Body of pancreas (tissue), 4 donors: ENCODE measurements at regions of chr10 and their contacts with region 1.

Region 1: DNA sequence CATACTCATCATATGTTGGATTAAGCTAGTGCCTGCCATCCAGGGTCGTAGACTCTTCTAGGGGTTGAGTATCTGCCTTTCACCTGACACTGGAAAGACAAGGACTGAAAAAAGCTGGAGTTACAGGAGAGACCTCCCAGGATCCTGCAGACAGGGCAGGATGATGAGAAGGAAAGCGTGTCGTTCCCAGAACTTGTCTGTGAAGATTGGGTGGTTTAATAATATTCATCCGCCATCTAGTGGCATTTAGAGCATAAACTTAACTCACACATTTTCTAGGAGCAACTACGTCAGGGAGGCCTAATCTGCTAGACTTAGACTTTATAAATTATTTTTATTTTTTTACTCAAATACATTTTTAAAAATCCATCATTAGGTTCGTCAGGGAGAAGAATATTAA is 59.6 kb downstream of the ADRB1 start:
- DNase-seq: peak in 2 of 4 donors; percentile 20 to 24
- ATAC-seq: peak; percentile 76
- H3K4me3 ChIP-seq: no peak overlapping the region
- H3K27ac ChIP-seq: no peak overlapping the region
- H3K4me1 ChIP-seq: peaks cover 12% of the 10 kb centered on the region
- H3K27me3 ChIP-seq: no peaks in the 10 kb centered on the region
- CTCF ChIP-seq: peak; percentile 34 to 84 (median 76)
- POLR2A ChIP-seq: no peak

Region 2: DNA sequence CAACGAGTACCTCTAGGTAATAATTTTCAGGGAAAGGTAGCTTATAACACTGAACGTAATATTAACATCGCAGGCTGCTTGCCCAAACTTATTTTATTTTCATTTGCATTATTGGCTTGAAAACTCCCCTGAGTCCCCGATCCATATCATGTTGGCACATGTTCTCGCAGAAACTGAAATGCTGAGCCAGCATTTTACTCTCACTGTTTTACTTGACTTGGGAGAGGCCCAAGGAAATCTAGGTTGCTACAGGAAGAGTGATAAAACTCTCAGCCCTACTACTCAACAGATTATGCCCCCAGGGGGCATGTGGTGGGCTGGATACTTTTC is 734.0 kb before region 1 on chr10:
- intact Hi-C with region 1: no loop called
- DNase-seq: no peak
- ATAC-seq: no peak
- H3K4me3 ChIP-seq: no peak overlapping the region
- H3K27ac ChIP-seq: no peak overlapping the region
- H3K4me1 ChIP-seq: no peaks in the 10 kb centered on the region
- H3K27me3 ChIP-seq: no peaks in the 10 kb centered on the region
- CTCF ChIP-seq: no peak
- POLR2A ChIP-seq: no peak

Region 3: DNA sequence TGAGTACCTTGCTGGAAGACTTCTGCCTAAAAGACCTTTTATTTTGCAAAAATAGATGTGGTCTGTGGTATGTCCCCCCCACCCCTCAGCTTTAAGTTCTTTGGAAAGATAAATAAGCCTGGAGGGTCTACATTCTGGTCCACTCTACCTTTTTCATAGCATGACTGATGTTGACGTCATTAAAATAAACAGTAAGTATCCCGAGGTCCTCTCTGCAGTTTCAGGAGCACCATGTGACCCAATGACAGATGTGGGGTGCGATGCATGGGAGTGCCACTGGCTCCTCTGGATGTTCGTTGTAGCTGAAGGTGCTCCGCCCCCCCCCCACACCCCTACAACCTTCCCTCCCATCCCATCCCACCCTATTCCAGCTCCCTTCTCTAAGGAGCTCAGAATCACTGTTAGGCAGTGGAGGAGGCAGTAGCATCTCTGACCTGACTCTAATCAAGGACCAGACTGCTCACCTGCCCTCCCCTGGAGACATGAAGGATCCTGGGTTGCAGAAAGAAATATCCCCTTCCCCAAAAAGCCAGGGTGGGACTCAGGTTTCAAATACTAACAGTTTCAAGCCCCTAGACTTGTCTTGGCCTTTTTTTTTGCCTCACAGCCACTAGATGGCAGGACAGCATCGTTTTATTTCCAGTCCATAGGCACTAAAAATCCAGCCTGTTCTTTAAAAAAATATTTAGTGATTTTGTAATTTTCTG is 398.5 kb before region 1 on chr10:
- intact Hi-C with region 1: loop called (anchors 10 kb)
- DNase-seq: peak in 2 of 4 donors; percentile 32 to 47
- ATAC-seq: peak; percentile 47
- H3K4me3 ChIP-seq: no peak overlapping the region
- H3K27ac ChIP-seq: no peak overlapping the region
- H3K4me1 ChIP-seq: peaks cover 28% of the 10 kb centered on the region
- H3K27me3 ChIP-seq: no peaks in the 10 kb centered on the region
- CTCF ChIP-seq: peak; percentile 31 to 69 (median 64)
- POLR2A ChIP-seq: no peak